Posterior cingulate gyrus (tissue), 11 donors: ENCODE measurements at regions of chr5 and their contacts with region 1.

Region 1: DNA sequence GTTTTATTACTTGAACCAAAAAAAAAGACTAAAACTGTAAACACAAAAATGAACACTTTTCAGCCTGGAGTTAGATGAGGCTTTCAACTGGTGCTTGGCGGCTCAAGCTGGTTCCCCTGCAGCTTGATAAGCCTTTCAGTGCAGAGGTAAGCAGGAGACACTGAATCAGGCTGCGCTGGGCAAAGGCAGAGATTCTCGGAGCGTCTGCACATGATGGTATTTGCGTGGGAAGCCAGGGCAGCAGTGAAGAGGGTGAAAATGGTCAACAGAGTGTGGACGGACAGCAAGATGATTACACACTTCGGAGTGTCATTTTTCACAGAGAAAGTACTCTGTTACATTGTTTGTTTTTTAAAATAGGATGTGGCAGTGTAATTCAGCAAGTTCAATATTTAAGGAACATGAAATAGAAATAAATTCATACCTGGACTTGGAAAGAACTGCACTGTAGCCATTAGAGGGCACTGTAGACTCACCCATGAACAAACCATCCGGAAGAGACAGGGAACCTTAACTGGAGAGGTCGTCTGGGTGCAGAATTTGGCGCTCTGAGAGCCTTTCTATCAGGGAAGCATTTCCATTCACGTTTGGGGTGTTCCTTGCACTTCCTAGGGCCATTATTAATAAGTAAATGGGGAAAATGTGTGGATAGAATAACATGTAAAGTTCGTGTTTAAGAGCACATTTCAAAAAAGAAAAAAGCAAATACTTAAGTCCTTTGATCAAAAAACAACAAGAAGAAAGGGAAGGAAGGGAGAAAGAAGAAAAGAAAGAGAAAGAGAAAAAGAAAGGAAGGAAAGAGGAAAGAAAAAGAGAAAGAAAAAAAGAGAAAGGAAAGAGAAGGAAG is 69.8 kb downstream of the ICE1 start:
- DNase-seq: peak in 1 of 10 donors; percentile 62

Region 2: GRCh38 chr5:5523066-5523505 is 30.8 kb after region 1 on chr5:
- intact Hi-C with region 1: no loop called
- DNase-seq: no peak

Region 3: DNA sequence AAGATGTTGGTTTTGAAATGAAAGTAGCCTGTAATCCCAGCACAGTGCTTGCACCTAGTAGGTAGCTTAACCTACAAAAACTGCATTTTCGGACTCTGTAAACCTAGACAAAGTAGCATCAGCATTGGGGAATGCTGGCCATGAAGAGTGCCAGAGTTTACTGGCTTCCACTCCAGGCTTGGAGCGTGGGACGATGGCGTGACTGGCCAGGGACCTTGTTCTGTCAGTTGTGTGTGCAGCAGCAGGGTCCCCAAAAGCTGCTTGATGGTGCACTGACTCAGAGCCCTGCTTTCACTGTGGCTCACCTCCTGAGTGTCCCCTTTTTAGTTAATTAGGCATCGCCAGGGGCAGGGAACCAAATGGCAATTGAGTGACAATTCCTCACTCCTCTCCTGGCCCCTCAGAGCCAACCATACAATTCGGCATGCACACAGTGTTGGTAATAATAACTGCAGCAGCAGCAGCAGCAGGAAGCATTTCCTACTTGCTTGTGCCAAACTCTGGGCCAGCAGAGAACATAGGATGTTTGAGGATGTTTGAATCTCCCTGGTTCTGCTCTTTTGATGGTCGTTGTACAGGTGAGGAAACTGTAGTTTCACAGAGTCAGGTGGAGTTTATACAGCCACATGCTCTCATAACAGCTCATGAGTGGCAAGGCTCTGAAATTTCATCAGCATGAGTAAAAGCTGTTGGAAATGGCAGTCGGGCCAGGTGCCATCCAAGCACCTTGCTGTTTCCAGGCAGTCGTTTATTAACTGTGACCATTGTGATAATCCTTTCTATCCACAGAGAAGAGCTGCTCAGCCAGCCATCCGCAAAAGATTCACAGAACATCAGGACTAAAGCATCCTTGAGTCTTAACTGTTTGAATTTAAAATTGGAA is 960.6 kb after region 1 on chr5:
- intact Hi-C with region 1: loop called (anchors 10 kb)
- DNase-seq: no peak

Region 4: DNA sequence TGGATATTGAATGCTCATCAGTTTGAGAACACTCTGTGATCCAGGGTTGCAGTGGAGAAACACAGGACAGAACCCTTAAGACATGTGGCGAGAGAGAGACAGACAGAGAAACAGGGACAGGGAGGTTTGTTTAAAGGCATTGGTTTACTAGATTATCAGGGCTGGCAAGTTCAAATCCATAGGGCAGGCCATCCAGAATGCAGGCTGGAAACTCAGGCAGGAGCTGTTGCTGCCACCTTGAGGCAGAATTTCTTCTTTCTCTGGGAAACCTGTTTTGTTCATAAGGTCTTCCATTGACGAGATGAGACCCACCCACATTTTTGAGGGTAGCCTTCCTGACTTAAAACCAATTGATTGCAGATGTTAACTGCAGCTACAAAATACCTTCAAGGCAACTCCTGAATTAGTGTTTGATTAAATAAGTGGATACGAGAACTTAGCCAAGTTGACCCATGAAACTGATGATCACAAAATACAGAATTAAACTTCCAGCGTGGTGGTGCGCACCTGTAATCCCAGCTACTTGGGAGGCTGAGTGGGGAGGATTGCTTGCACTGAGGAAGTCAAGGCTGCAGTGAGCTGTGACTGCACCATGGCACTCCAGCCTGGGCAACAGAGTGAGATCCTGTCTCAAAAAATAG is 1084.7 kb after region 1 on chr5:
- intact Hi-C with region 1: loop called (anchors 5 kb)
- DNase-seq: peak in 4 of 10 donors; percentile 30 to 86 (median 56)

Region 5: DNA sequence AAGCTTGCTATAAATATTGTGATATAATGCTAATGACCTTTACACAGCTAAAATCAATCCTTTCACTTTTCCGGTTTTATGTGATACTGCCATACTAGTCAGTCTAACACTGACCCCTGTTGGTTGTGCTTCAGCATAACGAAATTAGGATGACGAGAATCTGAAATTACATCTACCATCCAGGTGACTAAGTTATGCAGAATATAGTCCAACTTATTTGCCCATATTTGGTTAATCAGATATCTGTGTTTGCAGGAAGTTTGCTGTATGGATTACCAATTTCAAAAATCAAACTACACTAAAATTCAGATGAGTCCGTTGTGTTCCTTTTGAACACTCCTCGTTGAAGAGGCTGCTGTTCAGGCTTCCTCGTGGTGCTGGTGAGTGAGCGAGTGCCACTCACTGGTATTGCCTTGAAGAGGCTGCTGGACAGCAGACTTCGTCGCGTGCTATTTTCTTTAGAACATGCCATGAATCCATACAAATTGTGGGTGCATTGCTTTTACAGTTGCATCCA is 1253.5 kb after region 1 on chr5:
- intact Hi-C with region 1: loop called (anchors 10 kb)
- DNase-seq: no peak